MCF 10A (cell line): ENCODE measurements at regions of chr20 and their contacts with region 1.

Region 1: DNA sequence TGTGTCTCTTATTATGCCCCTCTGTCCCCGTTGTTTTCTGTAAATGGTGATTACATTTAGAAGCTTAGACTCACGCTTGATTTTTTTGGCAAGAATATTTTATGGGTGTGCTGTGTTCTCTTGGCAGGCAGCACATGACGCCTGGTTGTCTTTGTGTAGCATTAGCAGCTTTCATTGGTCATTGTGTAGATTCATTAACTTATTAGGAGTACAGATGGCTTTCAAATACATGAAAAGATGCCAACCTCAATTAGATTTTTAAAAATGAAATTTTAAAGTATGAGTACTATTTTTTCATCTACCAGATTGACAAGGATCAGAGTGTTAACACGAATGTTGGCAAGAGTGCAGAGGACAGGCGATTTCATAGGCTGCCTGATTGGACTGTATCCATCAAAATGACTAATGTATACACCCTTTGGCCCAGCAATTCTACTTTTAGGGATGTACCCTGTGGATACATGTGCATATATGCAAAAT is 15.2 kb downstream of the COX4I2 start:
- DNase-seq: peak; percentile 83
- H3K4me3 Mint-ChIP-seq: peak overlapping the region; percentile 2
- H3K27ac Mint-ChIP-seq: peak overlapping the region; percentile 57
- H3K4me1 Mint-ChIP-seq: peaks cover 12% of the 10 kb centered on the region
- H3K27me3 Mint-ChIP-seq: no peaks in the 10 kb centered on the region
- CTCF ChIP-seq: no peak

Region 2: DNA sequence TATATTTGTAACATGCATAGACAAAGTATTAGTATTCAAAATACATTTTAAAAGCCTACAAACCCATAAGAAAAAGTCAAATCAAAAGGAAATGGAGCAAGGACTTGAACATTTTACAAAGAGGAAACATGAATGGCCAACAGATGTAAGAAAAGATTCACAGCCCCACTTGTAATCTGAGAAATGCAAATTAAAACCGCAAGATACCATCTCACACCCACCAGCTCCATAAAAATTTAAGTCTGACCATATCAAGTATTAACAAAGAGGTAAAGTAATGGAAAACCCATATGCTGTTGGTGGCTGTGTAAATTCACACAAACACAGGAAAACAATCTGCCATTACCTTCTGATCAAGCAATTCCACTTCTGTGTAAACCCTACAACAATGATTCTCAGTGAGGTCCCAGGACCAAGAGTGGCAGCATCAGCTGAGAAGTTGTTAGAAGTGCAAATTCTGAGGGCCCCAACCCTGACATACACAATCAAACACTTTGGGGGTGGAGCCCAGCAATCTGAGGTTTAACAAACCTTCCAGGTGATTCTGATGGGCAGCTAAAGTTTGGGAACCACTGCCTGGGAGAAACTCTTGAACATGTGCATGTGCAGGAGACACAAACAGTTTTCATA is 38.8 kb after region 1 on chr20:
- CTCF ChIA-PET with region 1: no interaction called
- POLR2A ChIA-PET with region 1: no interaction called
- intact Hi-C with region 1: no loop called
- DNase-seq: no peak
- H3K4me3 Mint-ChIP-seq: no peak overlapping the region
- H3K27ac Mint-ChIP-seq: peak overlapping the region; percentile 31
- H3K4me1 Mint-ChIP-seq: peaks cover 34% of the 10 kb centered on the region
- H3K27me3 Mint-ChIP-seq: no peaks in the 10 kb centered on the region
- CTCF ChIP-seq: no peak

Region 3: GRCh38 chr20:31712564-31713311 is 59.8 kb after region 1 on chr20:
- CTCF ChIA-PET with region 1: interaction called, 626 read pairs
- POLR2A ChIA-PET with region 1: interaction called, 259 read pairs
- intact Hi-C with region 1: no loop called
- DNase-seq: peak; percentile 92
- H3K4me3 Mint-ChIP-seq: peak overlapping the region; percentile 70
- H3K27ac Mint-ChIP-seq: peak overlapping the region; percentile 96
- H3K4me1 Mint-ChIP-seq: peaks cover 78% of the 10 kb centered on the region
- H3K27me3 Mint-ChIP-seq: no peaks in the 10 kb centered on the region
- CTCF ChIP-seq: no peak

Region 4: GRCh38 chr20:31788578-31788977 is 135.6 kb after region 1 on chr20:
- CTCF ChIA-PET with region 1: no interaction called
- POLR2A ChIA-PET with region 1: no interaction called
- intact Hi-C with region 1: no loop called
- DNase-seq: peak; percentile 16
- H3K4me3 Mint-ChIP-seq: no peak overlapping the region
- H3K27ac Mint-ChIP-seq: no peak overlapping the region
- H3K4me1 Mint-ChIP-seq: no peaks in the 10 kb centered on the region
- H3K27me3 Mint-ChIP-seq: no peaks in the 10 kb centered on the region
- CTCF ChIP-seq: no peak